Activated CD8-positive, alpha-beta memory T cell treated with anti-CD3 and anti-CD28 coated beads, Interleukin-2, amount 10 ng/mL, durations not matched to agents 7 days and 5 days (primary cell): ENCODE measurements at regions of chr1 and their contacts with region 1.

Region 1: GRCh38 chr1:44799770-44800584 is at the start of gene PLK3:
- DNase-seq: peak; percentile 99
- ATAC-seq: peak; percentile 81
- H3K4me3 Mint-ChIP-seq: peak within 1 kb of the TSS; percentile 78
- H3K27ac Mint-ChIP-seq: peak within 1 kb of the TSS; percentile 100
- H3K4me1 Mint-ChIP-seq: peaks cover 29% of the 10 kb centered on the region
- H3K27me3 Mint-ChIP-seq: no peaks in the 10 kb centered on the region
- total RNA-seq, gene PLK3: 43.1 to 48.9 TPM

Region 2: GRCh38 chr1:44812822-44813543 is 13.0 kb after region 1 on chr1:
- CTCF ChIA-PET with region 1: interaction called, 62 read pairs
- DNase-seq: no peak
- ATAC-seq: no peak
- H3K4me3 Mint-ChIP-seq: peak overlapping the region; percentile 90
- H3K27ac Mint-ChIP-seq: peak overlapping the region; percentile 22
- H3K4me1 Mint-ChIP-seq: peaks cover 56% of the 10 kb centered on the region
- H3K27me3 Mint-ChIP-seq: no peaks in the 10 kb centered on the region